Calu3 (cell line): ENCODE measurements at regions of chr19 and their contacts with region 1.

Region 1: DNA sequence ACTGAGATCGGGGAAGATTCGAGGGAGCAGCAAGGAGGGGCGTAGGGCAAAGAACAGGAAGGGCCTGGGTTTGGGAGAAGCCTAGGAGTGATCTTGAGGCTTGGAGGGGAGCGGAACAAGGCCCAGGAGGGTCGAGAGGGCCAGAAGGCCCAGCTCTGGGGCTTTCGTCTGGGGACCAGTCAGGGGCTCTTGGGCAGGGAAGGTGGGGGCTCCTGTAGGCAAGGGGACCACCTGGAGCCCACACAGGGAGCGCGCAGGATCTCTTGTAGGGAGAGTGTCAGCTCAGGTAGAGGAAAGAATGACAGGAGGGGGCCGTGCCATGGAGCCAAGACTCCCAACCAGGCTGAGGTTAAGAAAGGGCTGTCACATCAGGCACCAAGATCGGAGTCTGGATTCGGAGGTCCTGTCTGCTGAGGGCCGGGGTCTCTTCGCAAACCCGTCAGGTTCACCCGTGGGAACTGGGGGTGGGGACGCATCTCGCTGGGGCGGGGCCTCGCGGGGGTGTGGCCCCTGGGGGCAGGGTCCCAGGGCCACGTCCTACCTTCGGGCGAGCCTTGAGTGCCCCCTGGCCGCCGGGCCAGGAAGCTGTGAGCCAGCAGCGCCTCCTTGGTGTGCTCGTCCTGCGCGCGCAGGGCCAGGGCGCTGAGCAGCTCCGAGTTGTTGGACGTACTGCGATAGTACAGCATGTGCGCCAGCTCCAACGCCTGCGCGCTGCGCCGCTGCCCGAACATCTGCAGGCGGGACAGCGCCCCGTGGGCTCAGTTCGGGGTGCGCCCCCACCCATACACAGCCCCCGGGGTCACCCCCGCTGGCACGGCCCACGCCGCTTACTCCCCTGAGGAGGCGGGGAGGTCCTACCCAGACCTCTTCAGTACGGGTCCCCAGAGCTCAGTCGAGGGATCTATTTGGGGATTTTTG is 8.4 kb downstream of the EMP3 start:
- DNase-seq: peak; percentile 97
- H3K4me3 Mint-ChIP-seq: peak overlapping the region; percentile 87
- H3K27ac Mint-ChIP-seq: peak overlapping the region; percentile 92
- H3K4me1 Mint-ChIP-seq: peaks cover 50% of the 10 kb centered on the region
- H3K27me3 Mint-ChIP-seq: no peaks in the 10 kb centered on the region
- CTCF ChIP-seq: peak; percentile 94

Region 2: GRCh38 chr19:48108997-48109782 is 224.5 kb before region 1 on chr19:
- CTCF ChIA-PET with region 1: no interaction called
- intact Hi-C with region 1: no loop called
- DNase-seq: no peak
- H3K4me3 Mint-ChIP-seq: no peak overlapping the region
- H3K27ac Mint-ChIP-seq: no peak overlapping the region
- H3K4me1 Mint-ChIP-seq: peaks cover 12% of the 10 kb centered on the region
- H3K27me3 Mint-ChIP-seq: peaks cover 21% of the 10 kb centered on the region
- CTCF ChIP-seq: no peak

Region 3: GRCh38 chr19:48308631-48309586 is 24.8 kb before region 1 on chr19:
- CTCF ChIA-PET with region 1: interaction called, 10 read pairs
- intact Hi-C with region 1: no loop called
- DNase-seq: no peak
- H3K4me3 Mint-ChIP-seq: no peak overlapping the region
- H3K27ac Mint-ChIP-seq: no peak overlapping the region
- H3K4me1 Mint-ChIP-seq: no peaks in the 10 kb centered on the region
- H3K27me3 Mint-ChIP-seq: peaks cover 67% of the 10 kb centered on the region
- CTCF ChIP-seq: peak; percentile 27

Region 4: GRCh38 chr19:48363810-48364563 is 30.3 kb after region 1 on chr19 and contains the starts of genes SYNGR4 and TMEM143:
- CTCF ChIA-PET with region 1: interaction called, 28 read pairs
- intact Hi-C with region 1: no loop called
- DNase-seq: peak; percentile 99
- H3K4me3 Mint-ChIP-seq: peak within 1 kb of the TSS; percentile 84
- H3K27ac Mint-ChIP-seq: peak within 1 kb of the TSS; percentile 97
- H3K4me1 Mint-ChIP-seq: no peaks in the 10 kb centered on the region
- H3K27me3 Mint-ChIP-seq: no peaks in the 10 kb centered on the region
- CTCF ChIP-seq: no peak
- total RNA-seq, gene SYNGR4: not detected in 2 replicates
- total RNA-seq, gene TMEM143: 10.4 and 14.8 TPM in 2 replicates

Region 5: GRCh38 chr19:48445606-48446481 is 112.1 kb after region 1 on chr19 and contains the start of gene GRWD1:
- CTCF ChIA-PET with region 1: interaction called, 15 read pairs
- intact Hi-C with region 1: no loop called
- DNase-seq: peak; percentile 92
- H3K4me3 Mint-ChIP-seq: peak within 1 kb of the TSS; percentile 99
- H3K27ac Mint-ChIP-seq: peak within 1 kb of the TSS; percentile 97
- H3K4me1 Mint-ChIP-seq: peaks cover 16% of the 10 kb centered on the region
- H3K27me3 Mint-ChIP-seq: peaks cover 38% of the 10 kb centered on the region
- CTCF ChIP-seq: peak; percentile 6
- total RNA-seq, gene GRWD1: 75.0 and 76.7 TPM in 2 replicates